ENCODE measurements at regions of chr13 and their contacts with region 1.

Region 1: DNA sequence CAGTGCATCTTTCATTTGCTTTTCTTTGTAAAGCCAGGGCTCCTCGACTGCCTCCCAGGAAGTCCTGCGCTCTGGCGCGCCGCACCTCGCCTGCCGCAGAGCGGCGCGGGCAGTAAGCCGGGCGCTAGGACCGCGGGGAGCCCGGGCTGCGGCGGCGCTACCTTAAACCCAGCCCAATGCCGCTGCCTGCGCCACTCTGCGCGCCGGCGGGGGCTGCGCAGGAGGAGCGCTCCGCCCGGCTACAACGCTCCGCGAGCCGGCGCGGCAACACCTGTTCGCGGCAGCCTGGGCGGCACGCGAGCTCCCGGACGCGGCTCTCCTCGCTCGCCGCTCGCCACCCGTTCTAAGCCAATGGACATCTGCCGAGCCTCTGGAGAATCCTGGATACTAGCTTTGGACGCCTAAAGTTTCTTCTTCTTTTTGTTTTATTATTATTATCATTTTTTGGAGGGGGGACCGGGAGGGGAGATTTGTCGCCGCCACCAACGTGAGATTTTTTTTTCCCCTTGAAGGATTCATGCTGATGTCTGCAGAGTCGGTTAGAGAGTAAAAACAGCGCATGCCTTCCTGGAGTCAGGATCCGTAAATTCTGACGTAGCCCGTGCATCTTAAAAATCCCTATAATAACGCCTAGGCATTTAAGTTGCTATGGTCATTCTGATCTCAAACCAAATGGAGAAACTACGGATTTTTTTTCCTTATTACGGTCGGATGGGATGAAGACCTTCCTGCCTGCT is at the start of gene FGF9:
- DNase-seq: peak; percentile 95
- H3K4me3 Mint-ChIP-seq: peak within 1 kb of the TSS; percentile 86
- H3K27ac Mint-ChIP-seq: peak within 1 kb of the TSS; percentile 60
- H3K4me1 Mint-ChIP-seq: peaks cover 40% of the 10 kb centered on the region
- H3K27me3 Mint-ChIP-seq: peaks cover 67% of the 10 kb centered on the region
- total RNA-seq, gene FGF9: 0.40 and 0.54 TPM in 2 replicates

Region 2: DNA sequence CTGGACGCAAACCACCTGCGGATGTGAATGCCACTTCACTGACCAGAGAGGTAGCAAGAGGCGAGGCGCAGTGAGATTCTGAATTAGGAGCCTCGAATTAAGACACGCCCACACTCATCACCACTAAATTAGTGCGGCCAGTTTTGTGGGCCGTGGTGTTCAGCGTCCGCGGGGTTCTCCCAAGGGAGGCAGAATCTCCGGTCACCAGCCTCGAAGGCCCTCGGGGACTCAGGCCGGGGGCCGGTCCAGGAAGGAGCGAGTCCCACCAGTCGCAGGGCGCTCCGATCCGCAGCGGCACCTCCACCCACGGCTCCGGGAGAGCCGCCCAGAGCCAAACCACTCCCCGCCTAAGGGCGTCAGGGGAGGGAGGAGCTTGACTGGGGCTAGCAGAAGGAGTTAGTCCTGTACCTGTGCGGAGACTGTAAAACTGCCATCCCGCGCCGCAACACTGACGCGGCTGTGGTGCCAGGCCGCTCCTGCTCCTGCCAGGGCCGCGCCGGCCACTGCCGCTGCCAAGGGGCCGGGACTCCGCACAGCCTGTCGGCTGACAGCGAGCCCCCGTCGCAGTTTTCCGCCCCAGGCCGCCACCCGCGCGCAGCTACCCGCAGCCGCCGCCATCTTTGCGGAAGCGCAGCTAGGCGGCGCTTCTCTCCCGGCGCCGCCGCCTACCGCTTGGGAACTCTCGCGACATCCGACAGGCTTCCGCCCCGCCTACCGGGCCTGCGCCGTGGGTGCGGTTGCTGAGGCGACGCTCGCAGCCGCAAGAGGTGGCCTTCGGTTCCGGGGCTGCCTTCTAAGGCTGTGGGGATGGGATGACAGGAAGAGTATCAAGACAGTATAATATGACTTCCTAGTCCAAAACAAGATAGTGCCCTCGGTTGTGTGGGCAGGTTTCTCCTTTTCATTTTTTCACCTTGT is 67.3 kb before region 1 on chr13 and contains the start of gene MICU2:
- intact Hi-C with region 1: loop called (anchors 1 kb)
- DNase-seq: peak; percentile 99
- H3K4me3 Mint-ChIP-seq: peak within 1 kb of the TSS; percentile 89
- H3K27ac Mint-ChIP-seq: peak within 1 kb of the TSS; percentile 89
- H3K4me1 Mint-ChIP-seq: peaks cover 25% of the 10 kb centered on the region
- H3K27me3 Mint-ChIP-seq: peaks cover 22% of the 10 kb centered on the region
- total RNA-seq, gene MICU2: 34.2 and 35.0 TPM in 2 replicates

Region 3: DNA sequence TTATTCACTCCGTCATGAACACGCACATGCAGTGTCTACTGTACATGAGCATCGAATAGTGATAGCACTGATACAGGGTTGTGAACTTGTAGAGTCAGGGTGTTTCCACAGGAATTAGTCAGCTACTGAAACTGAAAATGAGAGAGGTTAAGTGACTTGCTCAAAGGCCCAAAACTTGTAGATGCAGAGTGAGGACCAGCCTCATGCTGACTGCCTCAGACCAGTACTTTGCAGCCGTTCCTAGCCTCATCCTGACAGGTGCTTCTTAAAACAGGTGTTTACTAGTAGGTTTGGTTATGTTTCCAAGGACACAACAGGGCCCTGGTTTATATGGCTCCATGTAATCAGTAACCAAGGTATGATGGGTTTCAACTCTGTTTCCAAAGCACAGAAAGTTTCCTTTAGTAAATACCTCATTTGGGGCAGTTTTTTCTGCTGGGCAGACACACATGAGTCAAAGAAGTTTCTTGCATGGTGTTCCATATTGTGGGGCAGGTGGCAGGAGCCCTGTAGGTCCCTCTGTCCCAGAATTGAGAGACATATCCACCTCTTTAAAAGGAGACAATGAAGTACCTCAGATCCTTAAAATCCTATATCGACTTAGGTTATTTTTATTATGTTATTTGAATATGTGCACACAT is 15.8 kb after region 1 on chr13:
- intact Hi-C with region 1: loop called (anchors 2 kb)
- DNase-seq: peak; percentile 69
- H3K4me3 Mint-ChIP-seq: no peak overlapping the region
- H3K27ac Mint-ChIP-seq: no peak overlapping the region
- H3K4me1 Mint-ChIP-seq: peaks cover 9% of the 10 kb centered on the region
- H3K27me3 Mint-ChIP-seq: peaks cover 23% of the 10 kb centered on the region

Region 4: GRCh38 chr13:22178878-22179277 is 507.8 kb after region 1 on chr13:
- intact Hi-C with region 1: no loop called
- DNase-seq: no peak
- H3K4me3 Mint-ChIP-seq: no peak overlapping the region
- H3K27ac Mint-ChIP-seq: no peak overlapping the region
- H3K4me1 Mint-ChIP-seq: no peaks in the 10 kb centered on the region
- H3K27me3 Mint-ChIP-seq: no peaks in the 10 kb centered on the region